ENCODE measurements at regions of chr1 and their contacts with region 1.

Region 1: GRCh38 chr1:115112496-115113375 is 23.4 kb upstream of the TSPAN2 start:
- DNase-seq: peak in 2 of 3 donors; percentile 44
- H3K4me3 ChIP-seq: no peak overlapping the region
- H3K4me3 Mint-ChIP-seq: no peak overlapping the region
- H3K27ac ChIP-seq: no peak overlapping the region
- H3K27ac Mint-ChIP-seq: peak overlapping the region in 1 of 7 donors; percentile 42
- H3K4me1 ChIP-seq: peaks cover 16 to 17% of the 10 kb centered on the region in 2 donors
- H3K4me1 Mint-ChIP-seq: peaks cover 23% of the 10 kb centered on the region
- H3K27me3 ChIP-seq: no peaks in the 10 kb centered on the region
- H3K27me3 Mint-ChIP-seq: peaks cover 0 to 6% (median 0%) of the 10 kb centered on the region in 3 donors
- CTCF ChIP-seq: peak; percentile 99

Region 2: GRCh38 chr1:114979278-114979891 is 133.4 kb before region 1 on chr1:
- intact Hi-C with region 1: loop called (anchors 2 kb)
- DNase-seq: peak; percentile 31 to 67 (median 50)
- H3K4me3 ChIP-seq: no peak overlapping the region
- H3K4me3 Mint-ChIP-seq: no peak overlapping the region
- H3K27ac ChIP-seq: no peak overlapping the region
- H3K27ac Mint-ChIP-seq: no peak overlapping the region
- H3K4me1 ChIP-seq: no peaks in the 10 kb centered on the region
- H3K4me1 Mint-ChIP-seq: peaks cover 2% of the 10 kb centered on the region
- H3K27me3 ChIP-seq: peaks cover 0 to 2% of the 10 kb centered on the region in 2 donors
- H3K27me3 Mint-ChIP-seq: peaks cover 0 to 6% (median 4%) of the 10 kb centered on the region in 3 donors
- CTCF ChIP-seq: peak; percentile 92